AG04449 (cell line): ENCODE measurements at regions of chr6 and their contacts with region 1.

Region 1: DNA sequence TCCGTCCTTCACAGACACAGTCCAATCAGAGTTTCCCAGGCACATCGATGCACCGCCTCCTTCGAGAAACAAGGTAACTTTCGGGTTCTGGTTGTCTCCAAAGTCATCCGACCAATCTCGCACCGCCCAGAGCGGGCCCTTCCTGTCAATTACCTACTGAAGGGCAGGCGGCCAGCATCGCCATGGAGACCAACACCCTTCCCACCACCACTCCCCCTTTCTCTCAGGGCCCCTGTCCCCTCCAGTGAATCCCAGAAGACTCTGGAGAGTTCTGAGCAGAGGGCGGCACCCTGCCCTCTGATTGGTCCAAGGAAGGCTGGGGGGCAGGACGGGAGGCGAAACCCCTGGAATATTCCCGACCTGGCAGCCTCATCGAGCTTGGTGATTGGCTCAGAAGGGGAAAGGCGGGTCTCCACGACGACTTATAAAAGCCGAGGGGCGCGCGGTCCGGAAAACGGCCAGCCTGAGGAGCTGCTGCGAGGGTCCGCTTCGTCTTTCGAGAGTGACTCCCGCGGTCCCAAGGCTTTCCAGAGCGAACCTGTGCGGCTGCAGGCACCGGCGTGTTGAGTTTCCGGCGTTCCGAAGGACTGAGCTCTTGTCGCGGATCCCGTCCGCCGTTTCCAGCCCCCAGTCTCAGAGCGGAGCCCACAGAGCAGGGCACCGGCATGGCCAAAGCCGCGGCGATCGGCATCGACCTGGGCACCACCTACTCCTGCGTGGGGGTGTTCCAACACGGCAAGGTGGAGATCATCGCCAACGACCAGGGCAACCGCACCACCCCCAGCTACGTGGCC is at the start of gene HSPA1B:
- DNase-seq: peak; percentile 99
- H3K4me3 ChIP-seq: peak within 1 kb of the TSS; percentile 86
- CTCF ChIP-seq: no peak

Region 2: GRCh38 chr6:31702819-31703522 is 124.5 kb before region 1 on chr6 and contains the start of gene ABHD16A:
- CTCF ChIA-PET with region 1: interaction called, 4 read pairs
- POLR2A ChIA-PET with region 1: interaction called, 17 read pairs
- DNase-seq: peak; percentile 84
- H3K4me3 ChIP-seq: peak within 1 kb of the TSS; percentile 84
- CTCF ChIP-seq: no peak

Region 3: GRCh38 chr6:31739639-31740396 is 87.7 kb before region 1 on chr6 and contains the start of gene MSH5:
- CTCF ChIA-PET with region 1: interaction called, 14 read pairs
- POLR2A ChIA-PET with region 1: interaction called, 32 read pairs
- DNase-seq: peak; percentile 91
- H3K4me3 ChIP-seq: peak within 1 kb of the TSS; percentile 95
- CTCF ChIP-seq: no peak

Region 4: GRCh38 chr6:31795616-31796298 is 31.7 kb before region 1 on chr6 and contains the start of gene VARS1:
- CTCF ChIA-PET with region 1: interaction called, 8 read pairs
- POLR2A ChIA-PET with region 1: interaction called, 17 read pairs
- DNase-seq: no peak
- H3K4me3 ChIP-seq: peak within 1 kb of the TSS; percentile 68
- CTCF ChIP-seq: peak; percentile 97

Region 5: GRCh38 chr6:31815025-31815838 is 12.3 kb before region 1 on chr6 and contains the starts of genes HSPA1A and HSPA1L:
- CTCF ChIA-PET with region 1: interaction called, 5 read pairs
- POLR2A ChIA-PET with region 1: interaction called, 45 read pairs
- DNase-seq: peak; percentile 63
- H3K4me3 ChIP-seq: peak within 1 kb of the TSS; percentile 80
- CTCF ChIP-seq: no peak